ENCODE measurements at regions of chr11 and their contacts with region 1.

Region 1: GRCh38 chr11:111230122-111230465 is 15.4 kb upstream of the POU2AF2 start:
- DNase-seq: no peak
- H3K4me3 Mint-ChIP-seq: no peak overlapping the region
- H3K27ac Mint-ChIP-seq: no peak overlapping the region
- H3K4me1 Mint-ChIP-seq: peaks cover 15% of the 10 kb centered on the region
- H3K27me3 Mint-ChIP-seq: peaks cover 16% of the 10 kb centered on the region

Region 2: DNA sequence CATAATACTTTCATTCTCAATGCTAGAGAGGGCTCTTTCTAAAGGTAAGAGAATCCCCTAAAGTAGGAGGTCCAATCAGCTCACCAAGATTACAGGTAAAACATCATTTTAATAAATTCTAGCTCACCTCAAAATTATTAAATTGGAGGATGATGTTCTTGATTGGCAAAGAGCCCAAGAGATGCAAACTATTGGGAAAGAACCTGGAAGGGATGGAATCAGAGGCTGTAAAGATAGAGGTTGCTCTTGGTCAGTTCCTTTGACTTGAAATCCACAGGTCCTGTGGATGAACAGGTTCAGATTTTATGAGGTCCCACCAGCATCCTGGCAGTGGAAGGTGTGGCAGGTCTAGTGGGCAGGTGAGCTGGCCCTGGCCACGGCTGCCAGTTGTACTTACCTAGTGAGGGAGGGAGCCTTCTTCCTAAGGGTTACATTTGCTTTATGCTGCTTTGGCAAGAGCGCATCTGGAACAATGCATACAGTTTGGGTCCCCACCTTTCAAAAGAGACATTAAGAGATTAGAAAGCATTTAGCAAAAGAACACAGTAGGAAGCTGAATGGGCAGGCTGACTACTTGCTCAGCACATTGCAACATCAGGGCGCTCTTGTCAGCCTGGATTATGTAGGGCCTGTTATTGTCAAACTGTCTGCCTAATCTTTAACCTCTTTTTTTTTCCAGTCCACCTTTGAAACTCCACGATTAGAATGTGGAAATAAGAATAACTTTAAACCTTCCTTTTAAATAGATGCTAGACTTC is 1030.7 kb before region 1 on chr11:
- CTCF ChIA-PET with region 1: no interaction called
- POLR2A ChIA-PET with region 1: no interaction called
- intact Hi-C with region 1: loop called (anchors 10 kb)
- DNase-seq: no peak
- H3K4me3 Mint-ChIP-seq: no peak overlapping the region
- H3K27ac Mint-ChIP-seq: no peak overlapping the region
- H3K4me1 Mint-ChIP-seq: no peaks in the 10 kb centered on the region
- H3K27me3 Mint-ChIP-seq: peaks cover 3% of the 10 kb centered on the region

Region 3: GRCh38 chr11:110447897-110448745 is 782.0 kb before region 1 on chr11:
- CTCF ChIA-PET with region 1: interaction called, 17 read pairs
- POLR2A ChIA-PET with region 1: no interaction called
- intact Hi-C with region 1: loop called (anchors 1 kb)
- DNase-seq: no peak
- H3K4me3 Mint-ChIP-seq: no peak overlapping the region
- H3K27ac Mint-ChIP-seq: no peak overlapping the region
- H3K4me1 Mint-ChIP-seq: peaks cover 16% of the 10 kb centered on the region
- H3K27me3 Mint-ChIP-seq: no peaks in the 10 kb centered on the region

Region 4: GRCh38 chr11:110711776-110712658 is 518.1 kb before region 1 on chr11 and contains the start of gene ARHGAP20:
- CTCF ChIA-PET with region 1: no interaction called
- POLR2A ChIA-PET with region 1: no interaction called
- intact Hi-C with region 1: loop called (anchors 1 kb)
- DNase-seq: peak; percentile 61
- H3K4me3 Mint-ChIP-seq: peak within 1 kb of the TSS; percentile 47
- H3K27ac Mint-ChIP-seq: no peak within 1 kb of the TSS
- H3K4me1 Mint-ChIP-seq: peaks cover 12% of the 10 kb centered on the region
- H3K27me3 Mint-ChIP-seq: peaks cover 48% of the 10 kb centered on the region
- total RNA-seq, gene ARHGAP20: 0.05 TPM in 1 of 2 experiments, not detected in the other

Region 5: DNA sequence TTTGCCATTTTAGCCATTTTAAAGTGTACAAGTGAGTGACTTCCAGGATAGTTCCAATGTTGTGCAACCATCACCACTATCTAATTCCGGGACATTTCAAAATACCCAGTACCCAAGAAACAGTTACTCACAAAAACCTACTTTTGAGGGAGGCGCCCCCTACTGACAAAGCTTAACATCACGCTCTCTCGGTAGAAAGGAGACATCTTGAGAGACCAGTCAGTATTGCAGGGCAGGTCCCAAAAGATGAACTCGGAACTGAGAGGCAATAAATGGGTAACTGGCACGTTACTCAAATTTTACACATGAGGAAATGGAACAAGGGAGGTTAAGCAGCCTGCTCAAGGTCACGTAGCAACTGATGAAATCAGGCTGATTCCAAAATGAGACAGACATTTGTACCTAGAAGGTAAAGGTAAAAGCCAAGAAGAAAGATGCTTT is 199.0 kb after region 1 on chr11:
- CTCF ChIA-PET with region 1: interaction called, 14 read pairs
- POLR2A ChIA-PET with region 1: no interaction called
- intact Hi-C with region 1: no loop called
- DNase-seq: peak; percentile 82
- H3K4me3 Mint-ChIP-seq: no peak overlapping the region
- H3K27ac Mint-ChIP-seq: no peak overlapping the region
- H3K4me1 Mint-ChIP-seq: peaks cover 2% of the 10 kb centered on the region
- H3K27me3 Mint-ChIP-seq: peaks cover 3% of the 10 kb centered on the region

Measured in activated CD4-positive, alpha-beta memory T cell treated with anti-CD3 and anti-CD28 coated beads for 36 hours (primary cell).